ENCODE measurements at regions of chr3 and their contacts with region 1.

Region 1: GRCh38 chr3:99866261-99866761 is 48.6 kb downstream of the CMSS1 start:
- DNase-seq: peak; percentile 30
- H3K4me3 Mint-ChIP-seq: peak overlapping the region; percentile 70
- H3K27ac Mint-ChIP-seq: peak overlapping the region; percentile 92
- H3K4me1 Mint-ChIP-seq: peaks cover 95% of the 10 kb centered on the region
- H3K27me3 Mint-ChIP-seq: no peaks in the 10 kb centered on the region

Region 2: GRCh38 chr3:99808151-99808794 is 58.0 kb before region 1 on chr3:
- intact Hi-C with region 1: no loop called
- DNase-seq: no peak
- H3K4me3 Mint-ChIP-seq: no peak overlapping the region
- H3K27ac Mint-ChIP-seq: no peak overlapping the region
- H3K4me1 Mint-ChIP-seq: no peaks in the 10 kb centered on the region
- H3K27me3 Mint-ChIP-seq: peaks cover 5% of the 10 kb centered on the region

Region 3: GRCh38 chr3:100073899-100074307 is 207.6 kb after region 1 on chr3:
- intact Hi-C with region 1: loop called (anchors 2 kb)
- DNase-seq: peak; percentile 8
- H3K4me3 Mint-ChIP-seq: peak overlapping the region; percentile 70
- H3K27ac Mint-ChIP-seq: peak overlapping the region; percentile 95
- H3K4me1 Mint-ChIP-seq: peaks cover 68% of the 10 kb centered on the region
- H3K27me3 Mint-ChIP-seq: no peaks in the 10 kb centered on the region

Measured in activated T-helper 1 cell treated with anti-CD3 and anti-CD28 coated beads, Interleukin-12 subunit alpha, Interleukin-12 subunit beta, Interleukin-2, Interleukin-4 antibody, amounts not matched to agents 30 ng/mL and 10 ng/mL and 1 ng/mL, durations not matched to agents 14 hours and 24 hours and 36 hours (primary cell).